ENCODE measurements at regions of chr3 and their contacts with region 1.

Region 1: GRCh38 chr3:149366941-149367840 is 10.3 kb downstream of the TM4SF1 start:
- DNase-seq: peak; percentile 99
- ATAC-seq: peak; percentile 77
- H3K4me3 ChIP-seq: 0 out of 2 replicates have a peak overlapping the region, but pooled peaks have one; percentile 27
- H3K27ac ChIP-seq: peak overlapping the region; percentile 99
- H3K4me1 ChIP-seq: peaks cover 66% of the 10 kb centered on the region
- H3K27me3 ChIP-seq: no peaks in the 10 kb centered on the region
- CTCF ChIP-seq: no peak

Region 2: GRCh38 chr3:149271669-149272068 is 95.5 kb before region 1 on chr3:
- CTCF ChIA-PET with region 1: no interaction called
- POLR2A ChIA-PET with region 1: no interaction called
- intact Hi-C with region 1: no loop called
- DNase-seq: no peak
- ATAC-seq: no peak
- H3K4me3 ChIP-seq: no peak overlapping the region
- H3K27ac ChIP-seq: no peak overlapping the region
- H3K4me1 ChIP-seq: peaks cover 21% of the 10 kb centered on the region
- H3K27me3 ChIP-seq: no peaks in the 10 kb centered on the region
- CTCF ChIP-seq: no peak

Region 3: DNA sequence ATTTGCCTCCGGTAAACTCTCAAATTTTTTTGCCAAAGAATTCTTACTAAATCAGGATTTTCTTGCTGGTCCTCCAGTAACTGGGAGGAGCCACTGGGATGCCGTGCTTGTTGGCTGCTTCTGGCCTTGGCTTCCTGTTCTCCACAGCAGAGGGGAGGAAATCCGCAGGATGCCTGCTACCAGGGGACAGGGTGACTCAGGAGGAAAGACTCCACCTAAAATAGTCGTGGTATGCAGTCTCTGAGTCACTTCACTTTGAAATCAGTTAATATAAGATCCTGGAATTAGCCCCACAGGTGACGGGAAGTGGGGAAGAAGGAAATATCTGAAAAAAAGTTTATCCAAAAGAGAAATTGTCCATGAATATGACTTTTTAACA is 27.3 kb before region 1 on chr3:
- CTCF ChIA-PET with region 1: no interaction called
- POLR2A ChIA-PET with region 1: interaction called, 5 read pairs
- intact Hi-C with region 1: loop called (anchors 1 kb)
- DNase-seq: peak; percentile 99
- ATAC-seq: peak; percentile 90
- H3K4me3 ChIP-seq: peak overlapping the region; percentile 55
- H3K27ac ChIP-seq: peak overlapping the region; percentile 96
- H3K4me1 ChIP-seq: peaks cover 50% of the 10 kb centered on the region
- H3K27me3 ChIP-seq: no peaks in the 10 kb centered on the region
- CTCF ChIP-seq: no peak

Region 4: DNA sequence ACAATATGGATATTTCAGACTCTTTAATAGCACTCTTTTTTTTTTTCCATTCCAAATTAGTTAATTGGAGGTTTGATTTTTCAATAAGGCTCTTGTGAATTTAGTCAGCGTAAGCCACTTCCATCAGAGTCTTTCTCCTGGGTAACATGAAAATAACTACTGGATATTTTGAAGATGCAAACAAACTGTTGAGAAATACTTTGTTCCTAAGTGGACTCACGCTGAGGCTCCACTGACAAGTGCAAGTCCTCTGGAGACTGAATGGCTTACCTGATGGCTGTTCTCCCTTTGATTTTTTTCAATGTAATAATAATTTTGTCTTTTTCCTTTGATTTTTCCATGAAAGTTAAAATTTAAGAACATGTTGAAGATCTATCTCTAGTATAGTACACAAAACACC is 36.3 kb after region 1 on chr3:
- CTCF ChIA-PET with region 1: no interaction called
- POLR2A ChIA-PET with region 1: no interaction called
- intact Hi-C with region 1: no loop called
- DNase-seq: no peak
- ATAC-seq: no peak
- H3K4me3 ChIP-seq: no peak overlapping the region
- H3K27ac ChIP-seq: no peak overlapping the region
- H3K4me1 ChIP-seq: peaks cover 40% of the 10 kb centered on the region
- H3K27me3 ChIP-seq: no peaks in the 10 kb centered on the region
- CTCF ChIP-seq: no peak

Measured in PC-3 (cell line).